GM18951 (cell line): ENCODE measurements at regions of chr13 and their contacts with region 1.

Region 1: DNA sequence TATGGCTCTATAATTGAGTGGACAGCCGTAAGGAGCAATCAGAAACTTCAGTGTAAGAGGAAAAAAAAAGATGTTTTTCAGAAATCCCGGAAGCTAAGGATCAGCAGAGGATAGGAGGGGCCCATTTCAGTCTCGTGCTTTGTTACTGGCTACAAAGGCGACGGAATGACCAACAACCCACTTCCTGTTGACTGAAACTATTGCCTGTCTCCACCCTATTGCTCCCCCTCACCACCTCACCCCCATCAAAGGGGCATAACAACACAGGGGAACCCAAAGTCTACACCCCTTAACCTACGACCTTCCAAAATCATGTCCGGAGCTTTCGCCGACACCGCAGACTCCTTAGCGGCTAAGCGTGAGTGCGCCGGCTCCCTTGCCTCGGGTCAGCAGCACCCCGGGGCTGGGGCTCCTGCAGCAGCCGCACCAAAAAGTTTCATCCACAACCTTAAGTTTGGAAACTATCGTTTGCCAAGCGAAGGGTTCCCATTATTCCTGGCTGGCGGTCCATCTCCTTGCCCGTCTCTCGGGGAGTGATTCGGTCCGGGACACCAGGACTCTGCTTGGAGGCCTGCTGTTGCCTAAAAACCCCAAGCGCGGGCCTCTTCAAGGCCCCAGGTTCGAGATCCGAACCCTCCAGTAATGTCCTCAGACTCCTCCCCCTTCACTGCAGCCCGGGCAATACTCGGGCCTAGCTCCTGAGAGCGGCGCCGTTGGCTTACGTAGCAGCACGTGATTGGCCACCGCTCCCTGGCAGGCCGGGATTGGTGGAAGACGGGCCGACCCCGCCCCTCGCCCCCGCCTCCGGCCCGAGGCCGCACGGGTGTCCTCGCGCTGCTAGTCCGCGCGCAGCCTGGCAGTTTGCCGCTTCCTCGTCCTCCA is at the start of gene TPP2:
- POLR2A ChIP-seq: peak; percentile 93

Region 2: GRCh38 chr13:102845630-102846260 is 249.4 kb after region 1 on chr13 and contains the start of gene ERCC5:
- in situ Hi-C with region 1: loop called (anchors 10 kb)
- POLR2A ChIP-seq: peak; percentile 85

Region 3: DNA sequence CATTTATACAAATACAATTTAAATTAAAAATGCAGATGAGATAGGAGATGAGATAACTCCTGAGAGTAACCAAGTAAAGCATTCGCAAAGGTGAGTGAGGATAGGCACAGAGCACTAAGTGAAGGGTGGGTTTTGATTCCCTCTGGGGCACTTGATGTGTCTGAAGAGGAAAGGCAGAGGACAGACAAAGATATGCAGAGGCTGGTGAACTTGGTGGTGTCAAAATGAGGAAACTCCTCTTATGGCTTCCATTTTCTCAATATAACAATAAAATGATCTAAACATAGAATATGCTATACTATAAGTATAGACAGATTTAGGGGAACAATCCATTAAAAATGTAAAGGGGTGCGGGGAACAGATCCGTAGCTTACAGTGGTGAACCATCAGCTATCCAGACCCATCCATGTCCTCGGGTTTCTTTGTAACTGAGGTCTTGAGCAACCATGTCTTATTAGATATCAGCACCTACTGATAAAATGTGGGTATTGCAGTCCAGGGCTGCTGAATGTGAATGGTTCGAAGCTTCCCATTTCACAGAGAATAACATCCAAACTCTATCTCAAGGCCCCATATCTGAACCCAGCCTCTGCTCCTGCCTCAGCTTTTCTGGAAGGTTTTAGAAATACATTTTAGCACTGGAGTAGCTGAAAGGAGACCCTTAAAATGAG is 543.7 kb after region 1 on chr13:
- in situ Hi-C with region 1: loop called (anchors 25 kb)
- POLR2A ChIP-seq: no peak